ENCODE measurements at regions of chr16 and their contacts with region 1.

Region 1: GRCh38 chr16:86575754-86576557 is 2.4 kb upstream of the FOXL1 start:
- DNase-seq: peak; percentile 96

Region 2: DNA sequence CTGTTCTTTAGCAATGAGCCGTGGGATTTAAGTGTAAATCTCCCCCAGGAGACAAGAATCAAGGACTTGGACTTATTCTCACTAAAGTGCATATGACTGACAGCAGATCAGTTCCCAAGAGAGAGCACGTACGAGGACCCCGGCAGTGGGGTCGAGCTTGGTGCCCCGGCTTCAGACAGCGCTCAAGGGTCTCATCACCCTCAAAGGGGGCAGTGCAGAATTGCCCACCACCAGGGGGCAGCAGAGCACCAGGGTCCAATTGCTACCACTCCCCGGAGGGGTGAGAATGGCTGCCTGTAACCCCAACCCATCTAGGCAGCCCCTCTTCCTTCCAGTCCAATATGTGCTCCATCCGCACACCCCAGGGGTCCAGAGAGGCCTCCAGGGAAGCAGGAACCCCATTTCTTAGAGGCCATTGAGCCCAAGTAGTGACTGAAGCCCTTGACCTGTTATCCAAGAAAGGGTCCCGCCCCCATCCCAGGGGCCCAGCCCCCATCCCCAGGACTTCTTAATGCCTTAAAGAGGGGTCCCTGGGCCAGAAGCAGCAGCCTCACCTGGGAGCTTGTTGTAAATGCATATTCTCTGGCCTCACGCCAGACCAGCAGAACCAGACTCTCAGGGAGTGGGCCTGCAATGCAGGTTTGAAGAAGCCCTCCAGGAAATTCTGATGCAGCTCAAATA is 1650.7 kb before region 1 on chr16:
- intact Hi-C with region 1: no loop called
- DNase-seq: peak; percentile 86

Region 3: GRCh38 chr16:86669937-86670749 is 94.2 kb after region 1 on chr16:
- intact Hi-C with region 1: loop called in 1 of 2 experiments (anchors 5 kb)
- DNase-seq: peak; percentile 88

Region 4: GRCh38 chr16:86697715-86698114 is 121.8 kb after region 1 on chr16:
- intact Hi-C with region 1: no loop called
- DNase-seq: no peak